ENCODE measurements at regions of chr1 and their contacts with region 1.

Region 1: DNA sequence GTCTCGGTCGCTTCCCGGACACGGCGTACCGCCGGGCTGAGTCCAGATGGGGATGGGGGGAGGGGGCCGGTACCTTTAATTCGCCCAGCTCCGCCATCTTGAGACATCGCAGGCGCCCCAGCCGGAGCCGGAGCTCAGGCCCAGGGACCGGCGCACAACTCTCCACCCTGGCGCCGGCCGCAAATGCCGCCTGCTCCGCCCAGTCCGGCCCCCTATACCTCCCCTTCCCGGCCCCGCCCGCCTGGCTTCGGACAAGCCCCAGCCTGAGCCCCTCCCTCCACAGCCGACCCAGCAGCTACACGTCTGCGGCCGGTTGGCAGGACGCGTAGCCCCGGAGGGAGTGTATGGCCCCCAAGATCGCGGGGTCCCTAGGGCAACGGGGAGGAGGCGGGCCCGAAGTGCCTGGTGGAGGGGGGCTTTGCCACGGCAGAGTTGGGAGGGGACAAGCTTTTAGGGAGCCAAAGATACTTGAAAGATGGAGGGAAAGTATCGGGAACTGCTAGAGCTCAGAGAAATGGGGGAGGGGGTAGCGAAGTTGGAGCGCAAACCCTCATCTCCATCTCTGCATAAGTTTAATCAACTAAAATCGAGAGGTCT is at the start of gene PIAS3:
- DNase-seq: peak; percentile 72 to 95
- H3K4me3 ChIP-seq: peak within 1 kb of the TSS; percentile 63 to 95 (median 89)
- H3K27ac ChIP-seq: peak within 1 kb of the TSS; percentile 78
- H3K4me1 ChIP-seq: peaks cover 0 to 5% (median 3%) of the 10 kb centered on the region in 4 experiments; a peak in 4 of 7 replicates
- H3K27me3 ChIP-seq: no peaks in the 10 kb centered on the region
- CTCF ChIP-seq: no peak
- EP300 ChIP-seq: peak in 1 of 2 experiments; percentile 61; a peak in 1 of 3 replicates
- POLR2A ChIP-seq: no peak; a peak in 1 of 3 replicates
- RAD21 ChIP-seq: no peak
- total RNA-seq, gene PIAS3: 36.7 and 40.7 TPM in 2 replicates

Region 2: GRCh38 chr1:145740266-145740665 is 118.7 kb before region 1 on chr1:
- CTCF ChIA-PET with region 1: no interaction called
- POLR2A ChIA-PET with region 1: no interaction called
- DNase-seq: no peak
- H3K4me3 ChIP-seq: no peak overlapping the region
- H3K27ac ChIP-seq: no peak overlapping the region
- H3K4me1 ChIP-seq: no peaks in the 10 kb centered on the region
- H3K27me3 ChIP-seq: no peaks in the 10 kb centered on the region
- CTCF ChIP-seq: no peak
- EP300 ChIP-seq: no peak
- POLR2A ChIP-seq: no peak
- RAD21 ChIP-seq: no peak

Region 3: DNA sequence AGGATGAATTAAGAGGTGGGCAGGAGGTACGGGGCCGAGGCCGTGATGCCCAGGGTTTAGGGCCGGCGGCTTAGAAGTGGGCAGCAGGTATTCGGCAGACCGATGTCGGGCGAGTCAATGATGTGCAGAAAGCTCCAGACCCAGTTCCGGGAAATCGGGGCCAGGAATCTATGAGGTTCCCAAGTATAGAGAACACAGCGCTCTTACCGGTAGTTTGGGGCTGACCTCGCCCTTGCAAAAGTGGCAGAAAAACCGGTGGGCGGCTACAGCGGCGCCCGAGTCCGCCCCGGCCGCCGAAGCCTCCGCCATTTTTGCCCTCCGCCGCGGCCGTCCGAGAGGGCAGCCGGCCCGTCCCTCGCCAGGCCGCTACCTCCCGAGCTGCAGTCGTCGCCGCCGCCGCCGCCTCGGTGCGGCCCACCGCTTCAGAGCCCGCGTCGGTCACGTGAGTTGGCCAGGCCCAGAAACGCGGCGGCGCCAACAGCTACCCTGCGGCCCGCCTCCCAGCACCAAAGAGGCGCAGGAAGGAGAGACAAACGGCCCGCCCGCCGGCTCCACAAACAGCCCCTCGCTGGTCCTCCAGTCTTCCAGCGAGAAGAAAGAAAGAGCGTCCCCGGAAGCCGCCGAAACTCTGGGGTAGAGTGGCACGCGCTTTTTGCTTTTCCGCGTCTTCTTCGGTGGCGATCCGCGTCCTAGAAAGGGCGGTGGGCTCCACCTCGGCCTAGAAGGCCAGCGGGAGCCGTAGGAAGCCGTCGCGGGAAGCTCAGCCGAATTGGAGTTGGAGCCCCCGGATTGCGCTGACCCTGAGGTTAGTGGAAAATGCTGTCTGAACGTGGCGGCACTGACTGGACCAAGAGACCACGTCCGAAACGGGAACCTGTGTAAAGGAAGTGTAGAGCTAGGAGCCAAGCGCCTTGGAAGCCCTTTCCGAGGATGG is 35.2 kb before region 1 on chr1 and contains the starts of genes POLR3C and RNF115:
- CTCF ChIA-PET with region 1: interaction called, 4 read pairs
- POLR2A ChIA-PET with region 1: interaction called, 25 read pairs
- DNase-seq: peak; percentile 62 to 88
- H3K4me3 ChIP-seq: peak within 1 kb of the TSS; percentile 75 to 100 (median 98)
- H3K27ac ChIP-seq: peak within 1 kb of the TSS; percentile 91
- H3K4me1 ChIP-seq: peaks cover 0 to 4% (median 0%) of the 10 kb centered on the region in 4 experiments; a peak in 1 of 7 replicates
- H3K27me3 ChIP-seq: no peaks in the 10 kb centered on the region
- CTCF ChIP-seq: no peak
- EP300 ChIP-seq: peak in 1 of 2 experiments; percentile 33; a peak in 1 of 3 replicates
- POLR2A ChIP-seq: peak in 1 of 2 experiments; percentile 69; a peak in 2 of 3 replicates
- RAD21 ChIP-seq: no peak
- total RNA-seq, gene POLR3C: 26.2 and 26.8 TPM in 2 replicates
- total RNA-seq, gene RNF115: 10.2 and 10.8 TPM in 2 replicates

Region 4: DNA sequence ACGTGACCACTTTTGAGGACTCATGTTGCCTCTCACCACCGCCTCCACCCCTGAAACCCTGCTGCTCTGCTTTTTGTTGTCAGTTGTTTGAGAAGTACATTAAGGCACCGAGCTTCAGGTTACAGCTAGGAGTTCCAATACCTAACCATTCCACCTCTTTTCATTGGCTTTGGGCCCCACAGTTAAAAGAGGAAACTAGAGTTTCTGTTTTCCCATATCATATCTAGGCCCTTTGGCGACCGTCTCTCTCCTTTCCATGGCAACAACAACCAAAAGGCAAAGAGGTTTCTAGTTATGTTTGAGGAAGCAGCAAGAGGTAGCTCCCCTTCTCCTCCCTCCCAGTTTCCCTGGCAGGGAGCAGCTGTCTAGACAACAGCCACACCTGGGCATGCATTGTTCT is 20.8 kb after region 1 on chr1:
- CTCF ChIA-PET with region 1: interaction called, 4 read pairs
- POLR2A ChIA-PET with region 1: interaction called, 34 read pairs
- DNase-seq: no peak
- H3K4me3 ChIP-seq: no peak overlapping the region
- H3K27ac ChIP-seq: no peak overlapping the region
- H3K4me1 ChIP-seq: peaks cover 0 to 10% (median 6%) of the 10 kb centered on the region in 4 experiments; a peak in 4 of 7 replicates
- H3K27me3 ChIP-seq: peaks cover 0 to 12% (median 8%) of the 10 kb centered on the region in 4 experiments; a peak in 6 of 7 replicates
- CTCF ChIP-seq: no peak
- EP300 ChIP-seq: no peak
- POLR2A ChIP-seq: no peak
- RAD21 ChIP-seq: no peak

Region 5: DNA sequence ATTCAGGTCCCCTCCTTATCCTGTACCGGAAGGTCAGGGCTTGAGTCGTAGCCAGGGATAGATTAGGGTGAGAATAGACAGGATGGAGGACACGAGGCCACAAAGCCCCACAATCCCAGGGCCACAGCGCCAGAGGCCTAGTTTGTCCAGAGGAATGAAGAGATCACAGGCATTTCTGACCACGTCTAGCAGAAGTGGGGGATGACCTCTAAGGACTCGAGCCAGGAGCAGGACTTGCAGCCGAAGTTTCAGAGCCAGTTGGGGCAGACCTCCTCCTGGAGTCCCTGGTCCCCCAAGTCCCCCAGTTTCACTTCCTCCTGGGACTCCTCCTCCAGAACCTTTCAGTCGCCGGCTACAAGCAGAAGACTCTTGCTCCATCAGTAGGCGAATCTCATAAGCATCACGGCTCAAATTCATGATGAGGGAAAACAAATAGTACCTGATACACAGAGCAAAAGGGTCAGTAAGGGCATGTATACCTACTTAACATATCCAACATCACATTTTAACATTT is 53.2 kb after region 1 on chr1:
- CTCF ChIA-PET with region 1: interaction called, 13 read pairs
- POLR2A ChIA-PET with region 1: interaction called, 3 read pairs
- DNase-seq: no peak
- H3K4me3 ChIP-seq: no peak overlapping the region
- H3K27ac ChIP-seq: no peak overlapping the region
- H3K4me1 ChIP-seq: peaks cover 0 to 3% (median 0%) of the 10 kb centered on the region in 4 experiments; a peak in 2 of 7 replicates
- H3K27me3 ChIP-seq: no peaks in the 10 kb centered on the region
- CTCF ChIP-seq: no peak
- EP300 ChIP-seq: no peak
- POLR2A ChIP-seq: no peak
- RAD21 ChIP-seq: no peak

Region 6: DNA sequence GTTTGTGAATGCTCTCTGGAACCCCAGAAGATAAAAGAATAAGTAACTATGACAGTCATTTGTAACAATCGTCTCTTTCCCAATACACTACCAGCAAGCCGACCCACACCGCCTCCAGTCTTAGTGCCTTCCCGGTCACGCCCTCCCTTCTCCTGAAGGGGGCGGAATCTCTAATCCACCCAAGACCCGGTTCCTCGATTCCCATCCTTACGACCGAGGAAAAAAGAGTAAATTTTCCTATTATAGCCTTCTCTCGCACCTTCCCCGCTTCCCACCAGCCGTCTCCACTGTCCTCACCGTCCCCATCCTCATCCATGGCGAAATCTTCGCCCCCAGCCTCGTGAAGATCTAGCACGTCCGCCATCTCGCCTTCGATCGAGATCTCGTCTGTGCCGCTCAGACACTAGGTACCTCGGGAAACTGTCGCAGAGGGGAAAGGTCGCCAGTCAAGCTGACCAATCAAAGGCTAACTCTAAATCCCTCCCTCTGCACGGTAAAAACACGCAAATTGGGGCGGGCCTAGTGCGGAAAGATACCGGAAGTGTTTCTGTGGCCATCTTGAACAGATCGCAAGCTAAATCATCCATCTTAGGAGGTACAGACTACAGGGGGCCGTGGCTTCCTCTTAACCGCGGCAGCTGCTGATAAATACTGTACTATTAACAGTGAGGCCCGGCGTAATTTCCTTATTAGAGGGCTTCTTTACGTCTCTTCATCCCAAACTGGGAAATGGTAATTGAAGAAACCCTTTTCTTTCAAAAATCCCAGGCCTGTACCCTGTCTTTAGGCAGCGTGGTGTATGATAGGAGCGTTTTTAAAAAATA is 68.3 kb after region 1 on chr1 and contains the start of gene RBM8A:
- CTCF ChIA-PET with region 1: no interaction called
- POLR2A ChIA-PET with region 1: interaction called, 23 read pairs
- DNase-seq: peak; percentile 85 to 91
- H3K4me3 ChIP-seq: peak within 1 kb of the TSS; percentile 81 to 97 (median 92)
- H3K27ac ChIP-seq: peak within 1 kb of the TSS; percentile 90
- H3K4me1 ChIP-seq: peaks cover 0 to 4% (median 2%) of the 10 kb centered on the region in 4 experiments; a peak in 4 of 7 replicates
- H3K27me3 ChIP-seq: no peaks in the 10 kb centered on the region
- CTCF ChIP-seq: peak; percentile 27 to 61 (median 47); a peak in 3 of 4 replicates
- EP300 ChIP-seq: no peak
- POLR2A ChIP-seq: peak; percentile 88 to 92
- RAD21 ChIP-seq: no peak
- total RNA-seq, gene RBM8A: 216 and 222 TPM in 2 replicates

Measured in H1 (cell line).